ENCODE measurements at regions of chr11 and their contacts with region 1.

Region 1: GRCh38 chr11:86456052-86456939 is 81.6 kb downstream of the CCDC81 start:
- DNase-seq: peak; percentile 92
- H3K4me3 ChIP-seq: no peak overlapping the region
- H3K27ac ChIP-seq: no peak overlapping the region
- H3K4me1 ChIP-seq: peaks cover 8% of the 10 kb centered on the region
- H3K27me3 ChIP-seq: no peaks in the 10 kb centered on the region
- CTCF ChIP-seq: peak; percentile 97

Region 2: GRCh38 chr11:86571273-86571948 is 115.1 kb after region 1 on chr11:
- CTCF ChIA-PET with region 1: interaction called, 3 read pairs
- POLR2A ChIA-PET with region 1: no interaction called
- intact Hi-C with region 1: loop called (anchors 2 kb)
- DNase-seq: peak; percentile 58
- H3K4me3 ChIP-seq: no peak overlapping the region
- H3K27ac ChIP-seq: no peak overlapping the region
- H3K4me1 ChIP-seq: peaks cover 19% of the 10 kb centered on the region
- H3K27me3 ChIP-seq: no peaks in the 10 kb centered on the region
- CTCF ChIP-seq: peak; percentile 63

Region 3: DNA sequence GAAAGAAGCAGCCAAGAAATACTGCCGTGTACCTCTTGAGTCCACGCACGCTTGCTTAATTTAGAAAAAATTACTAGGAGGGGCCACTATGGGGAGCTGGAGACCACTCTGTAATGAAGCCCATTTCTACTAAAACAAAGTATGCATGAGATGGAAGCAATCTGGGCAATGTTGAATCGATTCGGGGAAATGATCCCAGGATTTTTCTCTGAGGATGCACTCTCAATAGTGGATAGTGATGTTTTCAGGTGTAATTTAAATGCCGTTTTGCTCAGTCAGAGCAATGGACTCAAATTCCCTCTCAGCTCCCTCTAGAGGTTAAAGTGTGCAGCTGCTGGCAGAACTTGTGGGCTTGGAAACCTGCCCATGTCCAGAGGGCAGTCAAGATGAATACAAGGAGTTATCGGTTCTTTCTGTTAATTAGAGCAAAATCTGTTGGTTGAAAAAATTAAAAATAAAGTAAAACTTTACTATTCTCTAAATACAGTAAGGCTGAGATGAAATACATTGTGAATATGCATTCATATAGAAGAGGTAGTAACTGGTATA is 152.0 kb after region 1 on chr11:
- CTCF ChIA-PET with region 1: interaction called, 10 read pairs
- POLR2A ChIA-PET with region 1: no interaction called
- intact Hi-C with region 1: loop called (anchors 1 kb)
- DNase-seq: peak; percentile 82
- H3K4me3 ChIP-seq: no peak overlapping the region
- H3K27ac ChIP-seq: no peak overlapping the region
- H3K4me1 ChIP-seq: peaks cover 5% of the 10 kb centered on the region
- H3K27me3 ChIP-seq: no peaks in the 10 kb centered on the region
- CTCF ChIP-seq: peak; percentile 100

Region 4: DNA sequence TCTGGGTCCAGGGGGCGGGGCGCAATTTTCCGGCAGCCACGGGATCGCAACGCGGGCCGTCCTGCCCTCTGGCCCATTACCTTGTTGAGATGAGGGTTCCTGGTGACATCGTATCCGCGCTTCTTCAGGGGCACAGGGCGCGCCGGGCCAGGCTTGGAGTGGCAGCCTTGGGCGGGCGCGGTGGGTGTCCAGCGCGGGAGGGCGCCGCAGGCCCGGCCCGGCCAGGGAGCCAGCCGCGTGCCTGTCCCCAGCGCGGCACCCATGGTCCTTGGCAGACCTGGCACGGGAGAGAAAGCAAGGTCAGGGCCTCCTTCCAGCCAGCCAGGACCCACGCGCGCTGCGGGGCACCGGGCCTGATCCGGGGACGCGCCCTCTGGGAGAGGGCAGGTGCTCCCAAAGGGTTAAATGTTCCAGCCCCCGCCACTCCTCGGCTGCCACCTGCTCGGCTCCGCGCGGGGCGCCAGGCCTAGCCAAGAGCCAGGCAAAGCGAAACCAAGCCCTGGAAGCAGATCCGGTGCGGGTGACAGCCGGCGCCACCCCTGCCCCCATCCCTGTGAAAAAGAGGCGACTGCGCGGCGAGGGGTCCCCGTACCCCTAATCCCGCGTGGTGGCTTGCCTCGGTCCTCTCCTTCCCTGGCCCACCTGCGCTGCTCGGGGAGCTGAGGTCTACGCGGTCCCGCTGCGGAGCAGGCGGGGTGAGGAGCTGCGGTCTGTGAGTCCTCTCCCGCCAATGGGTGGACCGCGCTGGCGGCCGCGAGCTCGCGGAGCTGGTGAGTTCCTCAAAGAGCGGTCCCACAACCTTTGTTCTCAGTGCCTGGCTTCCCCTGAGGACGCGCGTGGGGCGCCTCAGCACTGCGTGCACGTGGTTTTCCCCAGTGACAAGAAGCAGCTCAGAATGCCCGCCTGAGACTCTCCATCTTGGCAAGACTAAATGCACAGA is 215.7 kb after region 1 on chr11 and contains the start of gene ME3:
- CTCF ChIA-PET with region 1: no interaction called
- POLR2A ChIA-PET with region 1: no interaction called
- intact Hi-C with region 1: loop called (anchors 2 kb)
- DNase-seq: peak; percentile 66
- H3K4me3 ChIP-seq: peak within 1 kb of the TSS; percentile 55
- H3K27ac ChIP-seq: peak within 1 kb of the TSS; percentile 53
- H3K4me1 ChIP-seq: peaks cover 23% of the 10 kb centered on the region
- H3K27me3 ChIP-seq: no peaks in the 10 kb centered on the region
- CTCF ChIP-seq: no peak
- total RNA-seq, gene ME3: 6.9 and 7.6 TPM in 2 replicates

Region 5: GRCh38 chr11:86919557-86920210 is 463.4 kb after region 1 on chr11:
- CTCF ChIA-PET with region 1: no interaction called
- POLR2A ChIA-PET with region 1: no interaction called
- intact Hi-C with region 1: loop called (anchors 1 kb)
- DNase-seq: peak; percentile 90
- H3K4me3 ChIP-seq: no peak overlapping the region
- H3K27ac ChIP-seq: peak overlapping the region; percentile 87
- H3K4me1 ChIP-seq: peaks cover 63% of the 10 kb centered on the region
- H3K27me3 ChIP-seq: no peaks in the 10 kb centered on the region
- CTCF ChIP-seq: peak; percentile 88

Region 6: GRCh38 chr11:87290304-87290922 is 834.1 kb after region 1 on chr11:
- CTCF ChIA-PET with region 1: no interaction called
- POLR2A ChIA-PET with region 1: no interaction called
- intact Hi-C with region 1: loop called (anchors 5 kb)
- DNase-seq: peak; percentile 91
- H3K4me3 ChIP-seq: no peak overlapping the region
- H3K27ac ChIP-seq: peak overlapping the region; percentile 30
- H3K4me1 ChIP-seq: peaks cover 28% of the 10 kb centered on the region
- H3K27me3 ChIP-seq: no peaks in the 10 kb centered on the region
- CTCF ChIP-seq: peak; percentile 80

Measured in A673 (cell line).